ENCODE measurements at regions of chr19 and their contacts with region 1.

Region 1: GRCh38 chr19:12974301-12975220 is 5.2 kb downstream of the DAND5 start:
- DNase-seq: no peak
- ATAC-seq: peak in 3 of 8 donors; percentile 6 to 19 (median 12)
- H3K4me3 ChIP-seq: no peak overlapping the region
- H3K27ac ChIP-seq: peak overlapping the region in 1 of 10 donors; percentile 9
- H3K4me1 ChIP-seq: peaks cover 0 to 28% (median 9%) of the 10 kb centered on the region in 9 donors
- H3K27me3 ChIP-seq: no peaks in the 10 kb centered on the region
- CTCF ChIP-seq: no peak

Region 2: GRCh38 chr19:13082192-13083007 is 107.8 kb after region 1 on chr19:
- intact Hi-C with region 1: no loop called
- DNase-seq: no peak
- ATAC-seq: peak; percentile 13 to 62 (median 32)
- H3K4me3 ChIP-seq: no peak overlapping the region
- H3K27ac ChIP-seq: peak overlapping the region in 9 of 10 donors; percentile 3 to 66 (median 44)
- H3K4me1 ChIP-seq: peaks cover 34 to 72% (median 50%) of the 10 kb centered on the region in 9 donors
- H3K27me3 ChIP-seq: no peaks in the 10 kb centered on the region
- CTCF ChIP-seq: peak in 7 of 9 donors; percentile 27 to 56 (median 45)

Region 3: GRCh38 chr19:13093407-13094105 is 119.0 kb after region 1 on chr19:
- intact Hi-C with region 1: loop called in 6 of 10 experiments (anchors 1 to 5 kb)
- DNase-seq: peak; percentile 83
- ATAC-seq: peak; percentile 57 to 80 (median 67)
- H3K4me3 ChIP-seq: no peak overlapping the region
- H3K27ac ChIP-seq: peak overlapping the region; percentile 43 to 96 (median 90)
- H3K4me1 ChIP-seq: peaks cover 43 to 96% (median 83%) of the 10 kb centered on the region in 9 donors
- H3K27me3 ChIP-seq: no peaks in the 10 kb centered on the region
- CTCF ChIP-seq: peak; percentile 94 to 98 (median 96)

Region 4: DNA sequence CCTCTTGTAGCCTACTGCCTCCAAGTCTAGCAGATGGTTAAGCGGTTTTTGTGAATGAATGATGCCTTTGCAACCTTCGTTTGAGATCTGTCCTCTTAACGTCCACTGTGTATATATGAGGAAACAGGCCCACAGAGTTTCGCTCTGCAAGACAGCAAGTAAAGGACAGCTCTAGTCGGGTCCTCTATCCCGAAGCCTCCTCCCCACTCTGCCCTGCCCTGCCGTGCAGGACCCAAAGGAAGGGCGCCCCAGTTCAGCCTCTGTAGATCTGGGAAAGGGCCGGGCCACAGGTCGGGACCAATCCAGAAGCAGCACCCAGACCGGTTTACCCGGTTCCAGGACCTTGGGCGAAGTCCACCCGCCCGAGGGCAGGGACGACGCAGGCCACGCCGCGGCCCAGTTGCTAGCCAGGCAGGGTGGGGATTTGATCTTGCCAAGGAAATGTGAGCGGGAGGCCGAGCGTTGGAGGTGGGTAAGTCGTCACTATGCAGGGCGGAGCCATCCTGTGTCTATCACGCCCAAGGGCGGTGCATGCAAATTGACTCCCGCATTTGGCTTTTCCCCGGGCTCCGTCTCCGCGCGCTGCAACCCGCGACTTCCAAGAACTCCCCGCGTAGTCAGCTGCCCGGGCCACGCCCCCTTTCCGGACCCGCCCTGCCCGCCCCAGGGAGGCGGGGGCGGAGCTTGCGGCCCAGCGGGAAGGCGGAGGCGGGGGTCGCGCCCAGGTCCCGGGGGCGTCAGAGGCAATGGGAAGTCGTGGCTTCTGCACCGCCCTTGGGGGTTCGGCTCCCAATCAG is 188.2 kb after region 1 on chr19:
- intact Hi-C with region 1: loop called in 1 of 10 experiments (anchors 10 kb)
- DNase-seq: peak; percentile 96 to 99
- ATAC-seq: peak; percentile 84 to 92 (median 87)
- H3K4me3 ChIP-seq: peak overlapping the region in 9 of 10 donors; percentile 17 to 55 (median 45)
- H3K27ac ChIP-seq: peak overlapping the region; percentile 81 to 99 (median 96)
- H3K4me1 ChIP-seq: peaks cover 18 to 79% (median 59%) of the 10 kb centered on the region in 9 donors
- H3K27me3 ChIP-seq: no peaks in the 10 kb centered on the region
- CTCF ChIP-seq: no peak

Region 5: DNA sequence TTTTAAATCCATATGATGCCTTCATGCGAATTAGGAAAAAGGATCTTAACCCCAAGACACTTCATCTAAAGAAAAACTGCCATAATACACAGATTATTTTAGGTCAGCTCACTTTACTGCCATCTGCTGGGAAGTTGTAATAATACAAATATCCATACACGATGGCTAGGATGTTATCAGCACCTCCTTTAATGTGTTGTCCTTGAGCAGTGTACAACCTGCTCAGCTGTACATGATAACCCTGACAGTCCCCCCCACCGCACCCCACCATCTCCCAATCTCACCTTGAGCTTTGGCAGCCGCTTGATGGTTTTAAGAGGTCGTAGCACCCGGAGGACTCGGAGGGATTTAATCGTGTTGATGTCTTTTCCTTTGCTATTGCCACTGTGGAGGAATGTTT is 287.9 kb after region 1 on chr19:
- intact Hi-C with region 1: loop called (anchors 1 to 10 kb)
- DNase-seq: no peak
- ATAC-seq: peak; percentile 33 to 75 (median 58)
- H3K4me3 ChIP-seq: no peak overlapping the region
- H3K27ac ChIP-seq: no peak overlapping the region
- H3K4me1 ChIP-seq: peaks cover 0 to 18% (median 0%) of the 10 kb centered on the region in 9 donors
- H3K27me3 ChIP-seq: peaks cover 0 to 5% (median 0%) of the 10 kb centered on the region in 7 donors
- CTCF ChIP-seq: peak in 8 of 9 donors; percentile 39 to 76 (median 66)

Region 6: GRCh38 chr19:13588957-13589833 is 614.6 kb after region 1 on chr19:
- intact Hi-C with region 1: loop called in 8 of 10 experiments (anchors 5 to 10 kb)
- DNase-seq: peak; percentile 34 to 73
- ATAC-seq: peak; percentile 61 to 90 (median 78)
- H3K4me3 ChIP-seq: no peak overlapping the region
- H3K27ac ChIP-seq: no peak overlapping the region
- H3K4me1 ChIP-seq: peaks cover 0 to 5% (median 0%) of the 10 kb centered on the region in 9 donors
- H3K27me3 ChIP-seq: peaks cover 0 to 64% (median 39%) of the 10 kb centered on the region in 7 donors
- CTCF ChIP-seq: peak; percentile 90 to 99 (median 96)

Region 7: DNA sequence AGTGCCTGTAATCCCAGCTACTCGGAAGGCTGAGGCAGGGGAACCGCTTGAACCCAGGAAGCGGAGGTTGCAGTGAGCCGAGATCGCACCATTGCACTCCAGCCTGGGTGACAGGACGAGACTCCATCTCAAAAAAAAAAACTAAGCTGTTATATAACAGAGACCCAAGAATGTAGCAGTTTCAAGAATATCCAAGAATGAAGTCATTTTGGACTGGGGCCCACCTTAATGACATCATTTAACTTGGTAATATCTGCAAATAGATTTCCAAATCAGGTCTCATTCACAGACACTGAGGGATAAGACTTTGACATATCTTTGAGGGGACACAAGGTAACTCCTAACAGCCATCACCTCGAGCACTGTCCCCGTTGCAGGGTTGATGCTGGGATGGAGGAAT is 753.2 kb after region 1 on chr19:
- intact Hi-C with region 1: loop called in 1 of 10 experiments (anchors 10 kb)
- DNase-seq: peak in 1 of 2 donors; percentile 60
- ATAC-seq: no peak
- H3K4me3 ChIP-seq: no peak overlapping the region
- H3K27ac ChIP-seq: no peak overlapping the region
- H3K4me1 ChIP-seq: peaks cover 5 to 31% (median 14%) of the 10 kb centered on the region in 9 donors
- H3K27me3 ChIP-seq: no peaks in the 10 kb centered on the region
- CTCF ChIP-seq: no peak

Measured in heart right ventricle (tissue), 16 donors.